ENCODE measurements at regions of chr22 and their contacts with region 1.

Region 1: DNA sequence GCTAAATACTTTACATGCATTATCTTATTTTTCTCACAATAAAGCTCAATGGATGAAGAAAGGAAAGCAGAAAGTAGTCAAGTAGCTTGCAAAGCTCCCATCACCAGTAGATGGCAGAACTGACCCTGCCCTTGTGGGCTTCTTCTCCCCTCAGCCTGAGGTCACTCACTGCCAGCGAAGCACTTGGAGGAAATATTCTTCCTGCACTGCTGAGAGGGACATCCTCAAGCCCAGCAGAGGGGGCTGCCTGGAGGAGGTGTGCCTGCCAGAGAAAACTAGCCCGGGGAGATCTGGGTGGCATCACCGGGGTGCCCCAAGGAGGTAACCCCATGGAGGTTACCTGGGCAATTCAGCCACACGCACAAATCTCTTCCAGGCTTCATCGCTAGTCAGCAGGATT is 6.6 kb downstream of the APOL4 start:
- DNase-seq: peak; percentile 47
- ATAC-seq: peak; percentile 49
- H3K4me3 ChIP-seq: no peak overlapping the region
- H3K4me3 Mint-ChIP-seq: no peak overlapping the region
- H3K27ac ChIP-seq: no peak overlapping the region
- H3K27ac Mint-ChIP-seq: no peak overlapping the region
- H3K4me1 ChIP-seq: peaks cover 7 to 16% of the 10 kb centered on the region in 2 donors
- H3K4me1 Mint-ChIP-seq: peaks cover 19% of the 10 kb centered on the region
- H3K27me3 ChIP-seq: peaks cover 0 to 13% (median 0%) of the 10 kb centered on the region in 4 experiments
- H3K27me3 Mint-ChIP-seq: peaks cover 13% of the 10 kb centered on the region
- CTCF ChIP-seq: peak; percentile 58

Region 2: GRCh38 chr22:36136475-36136874 is 58.5 kb before region 1 on chr22:
- CTCF ChIA-PET with region 1: no interaction called
- POLR2A ChIA-PET with region 1: no interaction called
- intact Hi-C with region 1: no loop called
- DNase-seq: no peak
- ATAC-seq: no peak
- H3K4me3 ChIP-seq: no peak overlapping the region
- H3K4me3 Mint-ChIP-seq: no peak overlapping the region
- H3K27ac ChIP-seq: no peak overlapping the region
- H3K27ac Mint-ChIP-seq: no peak overlapping the region
- H3K4me1 ChIP-seq: no peaks in the 10 kb centered on the region
- H3K4me1 Mint-ChIP-seq: no peaks in the 10 kb centered on the region
- H3K27me3 ChIP-seq: no peaks in the 10 kb centered on the region
- H3K27me3 Mint-ChIP-seq: peaks cover 3% of the 10 kb centered on the region
- CTCF ChIP-seq: no peak

Region 3: DNA sequence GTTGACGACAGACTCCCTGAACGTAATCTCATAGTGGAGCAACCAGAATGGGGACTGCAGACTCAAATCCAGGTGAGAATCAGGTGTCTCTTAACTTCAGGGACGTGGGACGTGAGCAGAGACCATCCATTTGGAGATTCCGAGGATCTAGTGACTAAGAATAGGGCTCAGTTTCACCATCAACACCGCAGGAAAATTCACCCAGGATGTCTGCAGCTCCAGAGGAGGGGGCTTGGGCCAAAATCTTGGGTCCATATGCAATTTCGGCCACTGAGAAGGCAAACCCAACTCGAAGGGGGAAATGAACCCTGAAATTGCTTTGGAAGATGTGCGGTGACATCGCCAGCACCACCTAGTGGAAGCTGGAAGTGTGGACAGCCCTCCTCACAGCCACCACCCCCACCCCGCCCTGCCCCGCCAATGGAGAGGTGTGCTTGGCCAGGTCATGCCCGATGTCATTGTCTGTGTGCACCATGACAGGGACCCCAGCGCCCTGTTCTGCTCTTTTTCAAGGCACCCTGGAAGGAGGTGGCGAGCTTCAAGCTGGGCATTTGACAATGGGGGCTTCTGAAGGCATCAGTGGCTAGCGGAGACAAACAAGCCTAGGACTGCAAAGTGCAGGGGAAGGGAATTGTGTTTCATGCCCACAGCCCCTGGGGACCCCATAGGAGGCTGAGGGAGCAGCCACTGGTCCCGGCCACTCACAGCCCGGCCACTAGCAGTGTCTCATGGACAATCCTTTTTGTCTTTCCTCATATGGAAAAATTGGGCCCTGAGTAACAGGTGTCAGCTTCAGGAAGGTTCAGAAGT is 82.7 kb after region 1 on chr22:
- CTCF ChIA-PET with region 1: interaction called, 8 read pairs
- POLR2A ChIA-PET with region 1: no interaction called
- intact Hi-C with region 1: loop called (anchors 1 kb)
- DNase-seq: peak; percentile 82
- ATAC-seq: peak; percentile 95
- H3K4me3 ChIP-seq: no peak overlapping the region
- H3K4me3 Mint-ChIP-seq: no peak overlapping the region
- H3K27ac ChIP-seq: no peak overlapping the region
- H3K27ac Mint-ChIP-seq: peak overlapping the region; percentile 38
- H3K4me1 ChIP-seq: peaks cover 9 to 13% of the 10 kb centered on the region in 2 donors
- H3K4me1 Mint-ChIP-seq: peaks cover 14% of the 10 kb centered on the region
- H3K27me3 ChIP-seq: no peaks in the 10 kb centered on the region
- H3K27me3 Mint-ChIP-seq: no peaks in the 10 kb centered on the region
- CTCF ChIP-seq: peak; percentile 87

Region 4: GRCh38 chr22:36374603-36375024 is 179.6 kb after region 1 on chr22:
- CTCF ChIA-PET with region 1: no interaction called
- POLR2A ChIA-PET with region 1: no interaction called
- intact Hi-C with region 1: no loop called
- DNase-seq: no peak
- ATAC-seq: no peak
- H3K4me3 ChIP-seq: no peak overlapping the region
- H3K4me3 Mint-ChIP-seq: peak overlapping the region; percentile 34
- H3K27ac ChIP-seq: peak overlapping the region; percentile 88 to 90
- H3K27ac Mint-ChIP-seq: peak overlapping the region; percentile 87
- H3K4me1 ChIP-seq: peaks cover 99 to 100% of the 10 kb centered on the region in 2 donors
- H3K4me1 Mint-ChIP-seq: peaks cover 91% of the 10 kb centered on the region
- H3K27me3 ChIP-seq: no peaks in the 10 kb centered on the region
- H3K27me3 Mint-ChIP-seq: no peaks in the 10 kb centered on the region
- CTCF ChIP-seq: no peak

Measured in B cell (primary cell).